ENCODE measurements at regions of chr12 and their contacts with region 1.

Region 1: GRCh38 chr12:113196996-113197395 is 11.5 kb downstream of the RITA1 start:
- DNase-seq: peak; percentile 65 to 82 (median 82)
- ATAC-seq: peak; percentile 87 to 90
- H3K4me3 ChIP-seq: no peak overlapping the region
- H3K27ac ChIP-seq: no peak overlapping the region
- H3K4me1 ChIP-seq: no peaks in the 10 kb centered on the region
- H3K27me3 ChIP-seq: no peaks in the 10 kb centered on the region

Region 2: DNA sequence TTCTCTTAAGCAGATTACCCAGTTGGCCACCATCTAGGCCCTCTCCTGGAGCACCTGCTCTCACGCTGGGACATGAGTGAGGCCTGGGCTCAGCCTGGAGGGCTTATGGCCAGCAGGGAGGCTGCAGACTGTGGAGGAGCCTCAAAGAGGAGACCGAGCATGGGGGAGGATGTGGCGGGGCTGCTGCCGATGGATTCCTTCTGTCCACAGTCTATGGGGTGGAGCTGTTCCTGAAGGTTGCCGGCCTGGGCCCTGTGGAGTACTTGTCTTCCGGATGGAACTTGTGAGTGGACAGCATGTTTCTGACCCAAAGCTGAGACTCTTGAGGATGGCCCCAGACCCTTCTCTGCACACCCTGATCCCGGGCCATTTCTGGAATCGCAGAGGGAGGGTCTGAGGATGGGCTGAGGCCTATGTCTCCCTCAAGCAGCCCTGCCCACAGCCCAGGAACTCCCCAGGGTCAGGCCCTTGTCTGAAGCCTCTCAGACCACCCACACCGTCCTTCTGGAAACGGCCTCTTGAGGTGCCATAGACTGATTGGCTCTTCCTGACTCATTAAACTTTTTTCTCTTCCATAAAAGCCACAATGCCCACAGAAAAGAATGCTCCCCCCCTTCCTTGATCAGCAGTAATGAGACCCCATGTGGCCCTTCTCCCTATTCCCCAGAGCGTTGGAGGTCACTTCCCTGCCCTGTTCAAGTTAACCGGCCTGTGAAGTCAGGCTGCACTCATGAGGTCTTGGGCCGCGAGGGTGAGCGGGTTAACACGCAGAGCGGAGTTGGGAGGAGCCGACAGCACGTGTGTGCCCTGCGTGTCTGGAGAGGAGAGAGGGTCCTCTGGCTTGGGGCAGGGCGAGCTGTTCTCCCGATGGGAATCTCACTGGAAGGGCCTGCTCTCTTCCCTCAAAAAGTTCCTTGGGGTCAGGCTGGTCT is 88.9 kb after region 1 on chr12:
- intact Hi-C with region 1: loop called in 2 of 4 experiments (anchors 10 kb)
- DNase-seq: peak in 2 of 3 donors; percentile 27 to 41
- ATAC-seq: no peak
- H3K4me3 ChIP-seq: no peak overlapping the region
- H3K27ac ChIP-seq: no peak overlapping the region
- H3K4me1 ChIP-seq: no peaks in the 10 kb centered on the region
- H3K27me3 ChIP-seq: no peaks in the 10 kb centered on the region

Region 3: GRCh38 chr12:113299619-113300237 is 102.7 kb after region 1 on chr12:
- intact Hi-C with region 1: loop called in 1 of 4 experiments (anchors 10 kb)
- DNase-seq: peak; percentile 76 to 89 (median 86)
- ATAC-seq: peak; percentile 61 to 71
- H3K4me3 ChIP-seq: no peak overlapping the region
- H3K27ac ChIP-seq: peak overlapping the region; percentile 84
- H3K4me1 ChIP-seq: peaks cover 13% of the 10 kb centered on the region
- H3K27me3 ChIP-seq: no peaks in the 10 kb centered on the region

Region 4: DNA sequence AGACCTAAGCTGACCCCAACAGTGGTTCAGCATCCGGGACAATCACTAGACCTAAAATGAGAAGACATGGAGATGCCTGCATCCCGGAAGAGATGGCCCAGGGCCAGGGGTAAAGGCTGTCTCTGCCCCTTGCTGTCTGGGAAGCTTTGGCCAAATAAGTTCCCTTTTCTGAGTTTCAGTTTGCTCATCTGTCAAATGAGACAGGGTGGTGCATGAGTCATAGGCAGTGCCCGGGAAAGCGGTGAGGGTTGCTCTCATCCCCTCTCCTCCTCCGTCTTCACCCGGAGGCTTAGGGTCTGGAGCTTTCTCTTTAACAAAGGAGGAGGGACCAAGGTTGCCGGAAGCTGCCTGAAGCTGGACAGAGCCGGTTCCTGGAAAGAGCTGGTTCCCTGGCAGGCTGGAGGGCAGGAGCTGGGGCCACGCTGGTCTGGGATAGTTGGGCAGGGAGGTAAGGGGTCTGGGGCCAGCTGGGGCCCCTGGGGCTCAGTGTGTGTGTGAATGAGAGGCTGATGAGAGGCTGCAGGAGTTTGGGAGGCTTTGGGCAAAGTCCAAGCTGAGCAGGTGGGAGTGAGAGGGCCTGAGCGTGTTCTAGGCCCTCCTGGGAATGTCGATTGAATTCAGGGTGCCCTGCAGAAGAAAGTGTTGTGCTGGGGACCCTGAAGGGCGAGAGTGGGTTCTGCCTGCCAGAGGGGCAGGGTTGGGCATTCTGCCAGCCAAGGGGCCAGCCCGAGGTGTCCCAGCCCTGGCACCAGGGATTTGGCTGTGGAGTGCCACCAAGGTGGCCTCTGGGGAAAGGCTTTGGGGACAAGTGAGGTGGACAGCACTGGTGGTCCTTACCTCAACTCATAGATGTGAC is 225.3 kb after region 1 on chr12 and contains the start of gene SDSL:
- intact Hi-C with region 1: loop called in 3 of 4 experiments (anchors 10 kb)
- DNase-seq: peak; percentile 69 to 87 (median 83)
- ATAC-seq: peak; percentile 91 to 92
- H3K4me3 ChIP-seq: peak within 1 kb of the TSS; percentile 45
- H3K27ac ChIP-seq: no peak within 1 kb of the TSS
- H3K4me1 ChIP-seq: no peaks in the 10 kb centered on the region
- H3K27me3 ChIP-seq: no peaks in the 10 kb centered on the region
- total RNA-seq, gene SDSL: 4.2 to 9.5 (median 5.7) TPM

Measured in right cardiac atrium (tissue), 5 donors.